Ascending aorta (tissue), 2 donors: ENCODE measurements at regions of chr3 and their contacts with region 1.

Region 1: DNA sequence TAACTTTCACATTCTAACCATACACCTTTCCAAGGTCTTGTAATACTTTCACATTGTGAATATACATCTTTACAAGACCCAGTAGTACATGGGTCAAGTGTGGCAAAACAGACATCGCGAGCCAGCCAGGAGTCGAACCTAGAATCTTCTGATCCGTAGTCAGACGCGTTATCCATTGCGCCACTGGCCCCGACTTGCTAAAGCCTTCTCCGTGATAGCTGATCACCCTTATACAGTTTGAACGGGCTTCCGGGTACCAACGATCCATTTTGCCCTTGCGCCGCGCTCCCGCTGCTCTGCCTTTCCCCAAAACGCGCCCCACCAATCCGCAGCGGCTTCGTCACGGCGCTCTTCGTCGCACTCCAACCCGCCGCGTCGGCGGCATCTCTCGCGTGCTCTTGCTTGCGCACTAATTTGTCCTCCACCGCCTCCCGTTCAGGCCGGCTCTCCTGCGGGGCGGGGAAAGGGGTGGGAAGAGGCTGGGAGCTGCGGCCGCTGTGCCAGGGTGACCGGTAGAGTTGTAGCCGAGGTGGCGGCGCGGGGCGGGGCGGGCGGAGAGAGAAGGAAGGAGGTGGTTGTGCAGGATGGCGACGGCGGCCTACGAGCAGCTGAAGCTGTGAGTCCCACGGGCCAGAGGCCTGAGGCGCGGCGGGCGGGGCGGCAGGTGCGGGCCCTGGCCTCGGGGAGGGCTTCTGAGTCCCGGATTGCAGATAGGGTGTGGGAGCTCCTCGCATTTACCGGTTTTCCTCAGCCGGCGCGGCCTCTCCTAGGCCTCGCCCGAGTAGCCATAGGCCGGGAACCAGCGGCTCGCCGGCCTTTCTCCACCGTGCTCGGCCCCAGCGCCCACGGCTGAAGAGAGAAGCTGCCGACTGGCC is at the start of gene SACM1L:
- DNase-seq: peak; percentile 94 to 99
- H3K4me3 ChIP-seq: peak within 1 kb of the TSS; percentile 79 to 81
- H3K27ac ChIP-seq: peak within 1 kb of the TSS; percentile 81 to 89
- H3K4me1 ChIP-seq: peaks cover 0 to 25% of the 10 kb centered on the region in 2 donors
- H3K27me3 ChIP-seq: no peaks in the 10 kb centered on the region
- CTCF ChIP-seq: peak in 1 of 3 experiments; percentile 3
- total RNA-seq, gene SACM1L: 7.2 TPM

Region 2: GRCh38 chr3:45665101-45665572 is 24.0 kb before region 1 on chr3:
- intact Hi-C with region 1: loop called (anchors 1 kb)
- DNase-seq: no peak
- H3K4me3 ChIP-seq: peak overlapping the region; percentile 10 to 35
- H3K27ac ChIP-seq: peak overlapping the region; percentile 39 to 77
- H3K4me1 ChIP-seq: peaks cover 14 to 39% of the 10 kb centered on the region in 2 donors
- H3K27me3 ChIP-seq: no peaks in the 10 kb centered on the region
- CTCF ChIP-seq: peak; percentile 17 to 32 (median 25)

Region 3: GRCh38 chr3:45995236-45996192 is 306.4 kb after region 1 on chr3 and contains the start of gene FYCO1:
- intact Hi-C with region 1: loop called (anchors 10 kb)
- DNase-seq: peak; percentile 83 to 97
- H3K4me3 ChIP-seq: peak within 1 kb of the TSS; percentile 71 to 90
- H3K27ac ChIP-seq: peak within 1 kb of the TSS; percentile 94 to 99
- H3K4me1 ChIP-seq: peaks cover 15 to 45% of the 10 kb centered on the region in 2 donors
- H3K27me3 ChIP-seq: no peaks in the 10 kb centered on the region
- CTCF ChIP-seq: no peak
- total RNA-seq, gene FYCO1: 56.2 TPM